PC-9 (cell line): ENCODE measurements at regions of chr6 and their contacts with region 1.

Region 1: DNA sequence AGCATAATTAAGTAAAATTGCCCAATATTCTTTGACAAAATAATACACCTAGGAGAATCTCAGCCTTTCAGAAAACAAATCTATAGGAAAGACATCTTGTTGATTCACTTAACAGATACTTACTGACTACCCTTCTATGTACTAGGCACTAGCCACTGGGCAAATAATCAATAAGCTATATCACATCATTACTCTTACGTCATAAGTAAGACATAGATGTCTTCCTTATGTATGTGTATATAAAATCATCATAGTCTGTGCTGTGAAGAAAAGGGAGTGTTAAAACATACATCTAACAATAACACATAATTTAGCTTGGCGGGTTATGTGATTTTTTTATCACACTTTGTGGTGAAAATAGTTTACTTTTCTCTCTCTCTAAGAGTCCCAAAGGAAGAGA is 733.9 kb downstream of the EYS start:
- DNase-seq: no peak
- H3K4me3 ChIP-seq: no peak overlapping the region
- H3K27ac ChIP-seq: no peak overlapping the region
- H3K4me1 ChIP-seq: no peaks in the 10 kb centered on the region
- H3K27me3 ChIP-seq: no peaks in the 10 kb centered on the region
- CTCF ChIP-seq: no peak

Region 2: DNA sequence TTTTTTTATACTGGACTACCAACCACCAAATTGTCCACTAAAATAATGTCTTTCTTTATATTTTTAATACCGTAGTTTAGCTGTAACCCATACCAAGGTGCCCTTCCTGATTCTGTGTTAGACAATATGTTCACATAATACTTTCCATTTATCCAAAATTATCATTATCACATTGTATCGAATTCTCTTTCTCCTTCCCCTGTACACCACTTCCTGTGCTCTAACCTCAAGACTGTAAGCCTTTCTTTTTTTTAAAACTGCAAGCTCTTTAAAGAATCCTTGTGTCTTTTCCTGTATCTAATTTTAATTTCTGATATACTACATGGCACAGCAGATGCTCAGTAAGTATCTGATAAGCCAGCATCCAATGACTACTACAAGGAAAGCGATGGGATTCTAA is 183.7 kb before region 1 on chr6:
- CTCF ChIA-PET with region 1: no interaction called
- POLR2A ChIA-PET with region 1: no interaction called
- intact Hi-C with region 1: no loop called
- DNase-seq: no peak
- H3K4me3 ChIP-seq: no peak overlapping the region
- H3K27ac ChIP-seq: no peak overlapping the region
- H3K4me1 ChIP-seq: no peaks in the 10 kb centered on the region
- H3K27me3 ChIP-seq: no peaks in the 10 kb centered on the region
- CTCF ChIP-seq: no peak

Region 3: DNA sequence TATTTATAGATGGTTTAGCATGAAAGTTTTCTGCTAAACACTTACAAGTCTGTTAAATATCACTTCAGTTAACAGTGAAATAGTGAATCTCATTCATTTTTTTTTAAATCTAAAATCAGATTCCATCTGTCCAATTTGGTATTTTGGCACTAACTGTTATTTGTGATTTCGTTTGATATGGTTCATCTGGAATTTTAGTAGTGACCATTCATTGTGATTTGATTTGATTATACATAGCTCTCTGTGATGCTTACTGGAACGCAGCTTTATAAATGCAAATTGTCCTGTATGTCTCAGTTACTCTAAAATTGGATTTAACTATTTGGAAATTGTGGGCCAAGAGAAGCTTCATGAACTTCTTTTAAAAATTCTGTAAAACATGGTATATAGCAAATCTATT is 162.4 kb after region 1 on chr6:
- CTCF ChIA-PET with region 1: no interaction called
- POLR2A ChIA-PET with region 1: no interaction called
- intact Hi-C with region 1: loop called (anchors 10 kb)
- DNase-seq: no peak
- H3K4me3 ChIP-seq: no peak overlapping the region
- H3K27ac ChIP-seq: no peak overlapping the region
- H3K4me1 ChIP-seq: no peaks in the 10 kb centered on the region
- H3K27me3 ChIP-seq: no peaks in the 10 kb centered on the region
- CTCF ChIP-seq: no peak